ENCODE measurements at regions of chr6 and their contacts with region 1.

Region 1: DNA sequence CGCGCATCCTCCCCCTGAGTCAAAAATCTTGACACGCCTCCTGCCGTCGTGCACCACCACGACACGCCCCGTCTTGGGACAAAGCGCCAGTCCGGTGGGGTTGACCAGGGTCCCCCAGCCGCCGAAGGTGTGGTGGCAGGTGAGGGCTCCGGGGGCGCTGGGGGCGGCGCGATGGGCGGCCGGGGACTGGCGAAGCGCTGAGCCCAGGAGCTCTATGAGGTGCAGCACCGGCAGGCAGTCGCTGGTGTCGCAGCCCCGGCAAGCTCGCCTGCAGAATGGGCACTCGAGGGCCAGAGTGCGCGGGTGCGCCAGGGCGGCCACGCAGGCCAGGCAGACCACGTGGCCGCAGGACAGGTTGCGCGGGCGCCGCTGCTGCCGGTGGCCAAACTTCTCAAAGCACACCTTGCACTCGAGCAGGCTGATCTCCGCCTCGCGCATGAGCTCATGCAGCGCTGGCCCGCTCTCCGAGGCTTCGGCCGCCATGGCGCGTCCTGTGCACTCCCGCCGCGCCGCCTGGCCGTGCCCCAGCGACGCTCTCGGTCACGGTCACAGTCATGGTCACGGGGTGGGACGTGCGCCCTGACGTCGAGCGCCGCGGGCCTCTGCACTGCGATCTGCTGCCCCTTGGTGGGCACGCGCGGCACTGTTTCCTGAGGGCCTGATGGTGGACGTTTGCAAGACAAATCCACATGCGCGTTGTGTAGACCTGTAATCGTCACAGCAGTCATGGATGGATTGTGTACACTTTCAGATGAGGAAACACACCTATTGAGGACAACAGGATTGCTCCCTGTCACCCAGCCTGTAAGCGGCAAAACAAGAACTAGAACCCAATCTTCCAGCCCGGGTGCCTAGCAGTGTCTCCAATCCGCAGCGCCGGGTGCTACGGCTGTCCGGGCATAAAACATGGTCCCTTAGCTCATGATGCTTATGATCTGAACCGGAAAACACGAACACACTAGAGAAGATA is at the start of gene NHLRC1:
- DNase-seq: peak; percentile 88 to 94 (median 93)
- ATAC-seq: peak; percentile 97 to 99 (median 99)
- H3K4me3 ChIP-seq: peak within 1 kb of the TSS; percentile 29 to 74 (median 56)
- H3K27ac ChIP-seq: peak within 1 kb of the TSS in 4 of 12 donors; percentile 16 to 64 (median 50)
- H3K4me1 ChIP-seq: peaks cover 0 to 18% (median 9%) of the 10 kb centered on the region in 12 donors
- H3K27me3 ChIP-seq: no peaks in the 10 kb centered on the region
- CTCF ChIP-seq: peak; percentile 84 to 98 (median 94)
- POLR2A ChIP-seq: peak in 1 of 2 donors; percentile 50
- total RNA-seq, gene NHLRC1: 0.56 to 2.6 (median 1.3) TPM

Region 2: DNA sequence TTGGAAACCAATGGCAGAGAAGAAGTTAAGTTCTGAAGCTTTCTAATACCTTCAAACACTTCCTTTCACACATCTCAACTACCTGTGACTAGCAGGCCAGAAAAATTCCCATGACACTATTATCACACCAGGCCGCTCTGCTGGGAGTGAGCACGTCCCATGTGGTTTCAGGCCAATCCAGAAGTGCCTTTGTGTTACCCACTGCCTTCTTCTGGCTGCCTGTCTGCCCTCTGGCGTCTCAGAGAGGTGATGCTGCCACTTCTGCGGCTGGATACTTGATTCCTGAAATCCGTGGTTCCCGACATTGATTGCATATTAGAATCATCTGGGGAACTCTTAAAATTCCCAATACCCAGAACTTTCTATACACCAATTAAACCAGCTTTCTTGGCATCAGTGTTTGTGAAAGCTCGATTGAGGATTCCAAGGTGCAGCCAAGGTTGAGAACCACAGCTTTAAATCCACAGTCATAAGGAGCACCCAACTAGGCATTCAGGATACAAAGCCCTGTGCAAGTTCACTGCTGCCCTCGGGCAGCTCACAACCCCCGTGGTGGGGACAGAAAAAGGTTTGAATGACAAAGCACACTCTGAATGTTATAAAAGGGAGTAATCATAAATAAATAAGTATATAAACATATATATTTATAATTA is 955.0 kb before region 1 on chr6:
- intact Hi-C with region 1: loop called in 1 of 10 experiments (anchors 10 kb)
- DNase-seq: peak in 4 of 5 donors; percentile 54 to 76 (median 66)
- ATAC-seq: peak; percentile 84 to 97 (median 96)
- H3K4me3 ChIP-seq: no peak overlapping the region
- H3K27ac ChIP-seq: peak overlapping the region in 5 of 12 donors; percentile 6 to 59 (median 26)
- H3K4me1 ChIP-seq: peaks cover 0 to 10% (median 0%) of the 10 kb centered on the region in 12 donors
- H3K27me3 ChIP-seq: no peaks in the 10 kb centered on the region
- CTCF ChIP-seq: peak in 11 of 12 donors; percentile 32 to 63 (median 52)
- POLR2A ChIP-seq: no peak

Region 3: GRCh38 chr6:17831135-17831534 is 291.3 kb before region 1 on chr6:
- intact Hi-C with region 1: loop called in 8 of 10 experiments (anchors 1 to 5 kb)
- DNase-seq: peak in 3 of 5 donors; percentile 25 to 44 (median 44)
- ATAC-seq: peak; percentile 80 to 92 (median 90)
- H3K4me3 ChIP-seq: no peak overlapping the region
- H3K27ac ChIP-seq: peak overlapping the region in 7 of 12 donors; percentile 4 to 64 (median 27)
- H3K4me1 ChIP-seq: peaks cover 0 to 23% (median 8%) of the 10 kb centered on the region in 12 donors
- H3K27me3 ChIP-seq: no peaks in the 10 kb centered on the region
- CTCF ChIP-seq: no peak
- POLR2A ChIP-seq: no peak

Region 4: DNA sequence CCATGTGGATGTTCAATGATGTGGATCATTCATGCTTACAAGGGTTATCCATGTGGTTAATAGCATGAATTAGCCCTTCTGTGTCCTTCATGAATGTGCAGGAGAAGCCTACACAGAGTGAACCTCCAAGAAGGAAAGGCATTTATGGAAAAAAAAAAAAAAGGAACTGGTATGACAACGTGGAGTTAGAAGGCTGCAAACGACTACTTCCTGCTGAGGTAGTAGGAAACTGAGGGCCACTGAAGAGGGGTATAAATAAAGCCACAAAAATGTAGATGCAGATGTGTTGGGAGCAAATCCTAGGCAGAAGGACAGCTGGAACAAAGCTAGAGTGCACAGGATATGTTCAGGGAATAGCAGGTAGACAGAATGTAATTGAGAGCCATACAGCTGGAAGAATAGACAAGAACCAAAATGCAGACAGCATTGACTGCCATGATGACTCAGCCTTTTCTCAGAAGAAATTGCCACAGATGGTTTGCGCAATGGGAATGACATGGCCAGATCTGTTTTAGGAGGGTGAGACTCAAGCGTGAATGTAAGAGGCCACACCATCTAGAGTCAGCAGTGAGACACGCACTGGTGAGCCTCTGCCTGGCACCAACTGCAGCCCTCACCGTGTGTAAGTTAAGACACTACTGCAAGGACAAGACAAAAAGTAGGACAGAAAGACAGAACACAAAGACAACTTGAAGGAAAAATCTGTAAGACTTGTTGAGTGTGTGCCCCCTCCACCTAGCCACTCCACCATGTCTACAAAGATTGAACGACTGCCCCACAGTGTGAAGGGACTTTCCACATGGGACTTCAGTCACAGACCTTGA is 214.8 kb before region 1 on chr6:
- intact Hi-C with region 1: loop called in 1 of 10 experiments (anchors 10 kb)
- DNase-seq: peak in 4 of 5 donors; percentile 39 to 76 (median 53)
- ATAC-seq: peak in 3 of 4 donors; percentile 76 to 96 (median 89)
- H3K4me3 ChIP-seq: no peak overlapping the region
- H3K27ac ChIP-seq: peak overlapping the region in 9 of 12 donors; percentile 7 to 82 (median 35)
- H3K4me1 ChIP-seq: peaks cover 2 to 87% (median 46%) of the 10 kb centered on the region in 12 donors
- H3K27me3 ChIP-seq: no peaks in the 10 kb centered on the region
- CTCF ChIP-seq: no peak
- POLR2A ChIP-seq: no peak

Region 5: DNA sequence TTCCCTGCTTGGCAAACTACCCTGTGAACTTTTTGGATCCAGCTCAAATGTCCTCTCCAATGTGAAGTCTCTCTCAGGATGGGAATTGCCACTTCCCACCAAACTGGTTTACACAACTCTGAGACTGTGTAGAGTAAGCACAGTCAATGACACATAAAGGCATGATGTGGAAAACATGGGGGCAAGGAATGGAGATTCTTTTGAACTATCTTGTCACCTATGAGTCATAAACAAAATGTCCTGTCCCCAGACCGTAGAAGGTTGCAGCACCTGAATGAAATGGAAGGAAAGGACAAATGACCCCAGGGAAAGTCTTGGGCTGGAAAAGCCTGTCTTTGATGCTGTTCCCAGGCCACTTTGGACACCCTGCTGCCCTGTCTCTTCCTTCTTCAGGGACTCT is 124.0 kb before region 1 on chr6:
- intact Hi-C with region 1: loop called in 3 of 10 experiments (anchors 5 to 10 kb)
- DNase-seq: no peak
- ATAC-seq: no peak
- H3K4me3 ChIP-seq: no peak overlapping the region
- H3K27ac ChIP-seq: no peak overlapping the region
- H3K4me1 ChIP-seq: peaks cover 0 to 9% (median 0%) of the 10 kb centered on the region in 12 donors
- H3K27me3 ChIP-seq: no peaks in the 10 kb centered on the region
- CTCF ChIP-seq: no peak
- POLR2A ChIP-seq: no peak

Region 6: GRCh38 chr6:18186033-18186432 is 63.6 kb after region 1 on chr6:
- intact Hi-C with region 1: no loop called
- DNase-seq: no peak
- ATAC-seq: peak in 3 of 4 donors; percentile 42 to 75 (median 74)
- H3K4me3 ChIP-seq: no peak overlapping the region
- H3K27ac ChIP-seq: peak overlapping the region in 2 of 12 donors; percentile 15 to 67
- H3K4me1 ChIP-seq: peaks cover 0 to 21% (median 3%) of the 10 kb centered on the region in 12 donors
- H3K27me3 ChIP-seq: no peaks in the 10 kb centered on the region
- CTCF ChIP-seq: no peak
- POLR2A ChIP-seq: no peak

Region 7: DNA sequence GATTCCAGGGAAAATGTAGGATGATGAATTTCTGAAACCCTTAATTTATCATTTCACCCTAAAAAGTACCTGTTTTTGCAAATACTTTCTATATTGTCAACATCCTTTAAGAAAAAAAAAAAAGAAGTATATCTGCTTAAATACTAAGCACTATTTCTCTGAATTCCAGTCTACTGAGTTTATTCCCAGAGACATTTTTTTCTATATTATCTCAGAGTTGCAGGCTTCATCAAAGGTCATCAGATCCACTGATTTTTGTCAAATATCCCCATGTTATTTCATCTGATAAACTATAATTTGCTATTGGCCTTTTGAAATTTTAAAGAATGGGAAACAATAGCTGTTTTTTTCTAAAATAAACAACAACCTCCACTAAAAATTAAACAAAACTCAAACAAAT is 1357.1 kb after region 1 on chr6:
- intact Hi-C with region 1: no loop called
- DNase-seq: no peak
- ATAC-seq: no peak
- H3K4me3 ChIP-seq: no peak overlapping the region
- H3K27ac ChIP-seq: no peak overlapping the region
- H3K4me1 ChIP-seq: no peaks in the 10 kb centered on the region
- H3K27me3 ChIP-seq: no peaks in the 10 kb centered on the region
- CTCF ChIP-seq: no peak
- POLR2A ChIP-seq: no peak

Measured in heart left ventricle (tissue), 16 donors.